ENCODE measurements at regions of chr11 and their contacts with region 1.

Region 1: DNA sequence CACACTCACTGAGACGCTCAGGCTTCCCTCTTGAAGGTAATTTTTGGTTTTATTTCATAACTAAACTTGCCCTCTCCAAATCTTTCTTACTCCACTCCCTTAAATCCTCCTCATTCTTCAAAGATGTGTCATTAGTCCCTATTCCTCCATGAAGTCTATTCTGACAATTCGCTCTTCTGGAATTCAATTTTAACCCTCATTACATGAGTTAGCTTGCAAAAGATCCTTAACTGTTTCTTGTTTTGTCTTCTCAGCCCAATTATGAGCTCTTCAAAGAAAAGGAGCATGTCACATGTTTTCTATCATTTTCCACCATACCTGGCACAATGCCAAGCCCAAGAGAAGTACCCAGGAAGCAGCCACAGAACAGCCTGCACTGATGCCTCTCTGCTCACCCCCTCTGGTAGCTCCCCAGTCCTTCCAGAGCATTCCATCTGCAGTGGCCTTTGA is 13.0 kb downstream of the GALNT18 start:
- DNase-seq: no peak
- H3K4me3 ChIP-seq: no peak overlapping the region
- H3K27ac ChIP-seq: no peak overlapping the region
- H3K4me1 ChIP-seq: peaks cover 0 to 5% (median 0%) of the 10 kb centered on the region in 4 experiments; a peak in 4 of 7 replicates
- H3K27me3 ChIP-seq: no peaks in the 10 kb centered on the region
- CTCF ChIP-seq: no peak
- EP300 ChIP-seq: no peak
- POLR2A ChIP-seq: no peak
- RAD21 ChIP-seq: no peak

Region 2: DNA sequence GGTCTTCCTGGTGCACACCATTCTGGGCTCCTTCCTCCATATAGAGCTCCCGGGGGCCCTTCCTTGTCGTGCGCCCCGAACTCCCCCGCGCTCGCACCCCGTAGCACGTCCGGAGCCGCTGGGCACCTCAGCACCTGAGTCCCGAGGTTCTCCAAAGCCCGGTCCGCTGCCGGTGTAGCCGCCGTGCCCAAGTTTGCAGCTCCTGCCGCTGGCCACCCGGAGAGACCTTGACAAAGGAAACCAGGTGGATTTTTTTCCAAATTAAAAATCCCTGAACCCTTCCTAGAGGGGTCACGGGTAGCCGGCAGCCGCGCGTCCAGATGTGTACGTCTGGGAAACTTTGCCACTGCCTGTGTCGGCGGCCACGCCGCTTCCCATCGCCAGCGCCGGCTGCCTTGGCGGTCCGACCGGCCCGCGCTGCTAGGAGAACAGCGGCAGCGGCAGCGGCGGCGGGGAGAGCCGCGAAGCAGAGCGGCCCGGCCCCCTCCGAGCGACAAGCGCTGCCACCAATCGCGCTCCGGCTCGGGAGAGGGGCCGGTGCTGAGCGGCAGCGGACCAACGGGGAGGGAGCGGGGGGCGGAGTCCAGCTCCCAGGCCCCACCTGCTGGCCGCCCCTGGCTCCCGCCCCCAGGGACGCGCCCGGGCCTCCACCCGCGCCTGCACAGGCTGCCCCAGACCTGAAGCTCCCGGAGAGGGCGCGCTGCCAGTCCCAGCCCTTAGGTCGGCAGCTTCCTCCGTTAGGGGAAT is 12.9 kb after region 1 on chr11 and contains the start of gene GALNT18:
- CTCF ChIA-PET with region 1: interaction called, 16 read pairs
- POLR2A ChIA-PET with region 1: interaction called, 4 read pairs
- DNase-seq: peak; percentile 85 to 87
- H3K4me3 ChIP-seq: peak within 1 kb of the TSS; percentile 51 to 83 (median 76)
- H3K27ac ChIP-seq: no peak within 1 kb of the TSS
- H3K4me1 ChIP-seq: peaks cover 6 to 14% (median 8%) of the 10 kb centered on the region in 4 experiments; a peak in 6 of 7 replicates
- H3K27me3 ChIP-seq: peaks cover 5 to 31% (median 24%) of the 10 kb centered on the region in 4 experiments
- CTCF ChIP-seq: peak; percentile 39 to 47 (median 41)
- EP300 ChIP-seq: no peak
- POLR2A ChIP-seq: peak in 1 of 2 experiments; percentile 48; a peak in 1 of 3 replicates
- RAD21 ChIP-seq: peak; percentile 21 to 49; a peak in 3 of 4 replicates
- total RNA-seq, gene GALNT18: 5.7 and 6.0 TPM in 2 replicates

Region 3: GRCh38 chr11:11659567-11660362 is 51.0 kb after region 1 on chr11:
- CTCF ChIA-PET with region 1: no interaction called
- POLR2A ChIA-PET with region 1: no interaction called
- DNase-seq: no peak
- H3K4me3 ChIP-seq: no peak overlapping the region
- H3K27ac ChIP-seq: no peak overlapping the region
- H3K4me1 ChIP-seq: peaks cover 4 to 11% (median 7%) of the 10 kb centered on the region in 4 experiments
- H3K27me3 ChIP-seq: no peaks in the 10 kb centered on the region
- CTCF ChIP-seq: peak in 2 of 3 experiments; percentile 24 to 40; a peak in 2 of 4 replicates
- EP300 ChIP-seq: no peak
- POLR2A ChIP-seq: no peak
- RAD21 ChIP-seq: peak; percentile 16 to 39; a peak in 2 of 4 replicates